Activated CD4-positive, alpha-beta T cell treated with anti-CD3 and anti-CD28 coated beads for 36 hours (primary cell): ENCODE measurements at regions of chr14 and their contacts with region 1.

Region 1: DNA sequence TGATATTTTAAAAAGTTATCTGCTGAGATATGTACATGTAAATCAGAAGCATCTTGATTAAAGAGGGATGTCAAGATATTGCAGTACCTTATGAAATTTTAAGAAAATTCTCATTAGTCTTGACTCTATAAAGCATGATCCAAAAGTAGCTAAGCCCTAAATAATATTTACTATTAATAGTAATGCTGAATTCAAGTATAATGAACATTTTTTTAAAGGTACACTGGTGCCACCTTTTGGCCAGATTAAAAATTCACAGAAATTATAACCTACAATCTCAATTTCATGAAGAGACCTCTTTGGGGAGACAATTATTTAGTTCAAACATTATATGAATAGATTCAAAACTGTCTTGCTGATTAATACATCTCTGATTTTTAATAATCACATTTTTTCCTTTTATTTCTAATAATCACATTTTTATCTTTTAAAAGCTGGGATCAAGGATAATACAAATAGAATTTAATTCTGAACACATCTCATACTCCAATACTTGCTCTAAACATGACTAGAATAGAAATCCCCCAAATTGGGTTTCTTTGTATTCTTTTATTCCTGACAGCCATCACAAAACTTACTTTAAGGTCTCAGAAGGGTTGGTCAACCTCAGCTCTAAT is 13.4 kb downstream of the AKAP5 start:
- DNase-seq: no peak
- ATAC-seq: no peak
- H3K4me3 Mint-ChIP-seq: no peak overlapping the region
- H3K27ac Mint-ChIP-seq: no peak overlapping the region
- H3K4me1 Mint-ChIP-seq: peaks cover 37% of the 10 kb centered on the region
- H3K27me3 Mint-ChIP-seq: no peaks in the 10 kb centered on the region

Region 2: GRCh38 chr14:62905566-62905965 is 1573.2 kb before region 1 on chr14:
- CTCF ChIA-PET with region 1: no interaction called
- POLR2A ChIA-PET with region 1: no interaction called
- intact Hi-C with region 1: no loop called
- DNase-seq: no peak
- ATAC-seq: no peak
- H3K4me3 Mint-ChIP-seq: no peak overlapping the region
- H3K27ac Mint-ChIP-seq: no peak overlapping the region
- H3K4me1 Mint-ChIP-seq: no peaks in the 10 kb centered on the region
- H3K27me3 Mint-ChIP-seq: peaks cover 2% of the 10 kb centered on the region

Region 3: DNA sequence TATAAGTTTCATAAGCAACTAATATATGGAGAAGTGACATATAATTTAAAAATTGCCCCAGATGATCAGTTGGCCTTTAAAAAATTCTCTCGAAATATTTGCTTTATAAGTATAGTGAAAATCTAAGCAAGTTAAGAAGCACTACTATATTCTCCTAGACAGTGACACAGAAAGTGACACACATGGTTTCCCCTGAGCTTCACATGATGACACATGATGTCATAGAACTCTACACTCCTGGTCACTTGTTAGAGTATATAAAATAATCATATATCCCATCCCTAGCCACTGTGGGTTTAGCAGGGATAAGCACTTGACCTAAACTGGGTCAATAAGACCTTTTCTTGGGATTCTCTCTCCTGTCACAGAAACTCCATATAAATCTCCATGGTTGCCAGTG is 133.2 kb before region 1 on chr14:
- CTCF ChIA-PET with region 1: interaction called, 33 read pairs
- POLR2A ChIA-PET with region 1: no interaction called
- intact Hi-C with region 1: loop called (anchors 1 to 2 kb)
- DNase-seq: no peak
- ATAC-seq: no peak
- H3K4me3 Mint-ChIP-seq: no peak overlapping the region
- H3K27ac Mint-ChIP-seq: no peak overlapping the region
- H3K4me1 Mint-ChIP-seq: no peaks in the 10 kb centered on the region
- H3K27me3 Mint-ChIP-seq: no peaks in the 10 kb centered on the region

Region 4: DNA sequence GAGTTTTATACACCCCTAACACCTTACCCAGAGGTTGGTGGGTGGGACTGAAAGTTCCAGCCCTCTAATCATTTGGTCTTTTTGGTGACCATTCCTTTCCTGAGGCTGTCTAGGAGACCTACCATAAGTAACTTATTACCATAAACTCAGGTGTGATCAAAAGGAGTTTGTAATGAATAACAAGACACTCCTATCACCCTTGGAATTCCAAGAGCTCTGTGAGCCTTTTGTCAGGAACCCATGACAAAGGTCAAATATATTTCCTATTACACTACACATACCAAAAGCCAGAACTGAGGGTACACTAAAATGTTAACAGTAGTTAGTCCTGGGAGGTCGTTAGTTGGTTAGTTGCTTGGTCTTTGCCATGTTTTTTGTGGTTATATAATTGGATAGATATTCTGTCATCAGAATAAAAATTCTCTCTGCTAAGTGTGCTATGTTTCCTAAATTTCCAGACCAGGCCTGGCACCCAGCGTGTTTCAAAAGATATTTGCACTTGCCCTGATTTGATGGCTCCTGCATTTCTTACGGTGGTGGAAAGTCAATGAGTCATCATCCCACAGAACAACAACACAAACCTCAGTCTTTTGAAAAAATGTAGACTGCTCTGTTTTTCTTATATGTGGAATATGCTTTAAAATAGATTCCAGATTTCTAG is 40.4 kb before region 1 on chr14:
- CTCF ChIA-PET with region 1: interaction called, 3 read pairs
- POLR2A ChIA-PET with region 1: no interaction called
- intact Hi-C with region 1: loop called in 1 of 2 experiments (anchors 5 kb)
- DNase-seq: no peak
- ATAC-seq: peak; percentile 30
- H3K4me3 Mint-ChIP-seq: no peak overlapping the region
- H3K27ac Mint-ChIP-seq: peak overlapping the region; percentile 68
- H3K4me1 Mint-ChIP-seq: peaks cover 10% of the 10 kb centered on the region
- H3K27me3 Mint-ChIP-seq: no peaks in the 10 kb centered on the region

Region 5: DNA sequence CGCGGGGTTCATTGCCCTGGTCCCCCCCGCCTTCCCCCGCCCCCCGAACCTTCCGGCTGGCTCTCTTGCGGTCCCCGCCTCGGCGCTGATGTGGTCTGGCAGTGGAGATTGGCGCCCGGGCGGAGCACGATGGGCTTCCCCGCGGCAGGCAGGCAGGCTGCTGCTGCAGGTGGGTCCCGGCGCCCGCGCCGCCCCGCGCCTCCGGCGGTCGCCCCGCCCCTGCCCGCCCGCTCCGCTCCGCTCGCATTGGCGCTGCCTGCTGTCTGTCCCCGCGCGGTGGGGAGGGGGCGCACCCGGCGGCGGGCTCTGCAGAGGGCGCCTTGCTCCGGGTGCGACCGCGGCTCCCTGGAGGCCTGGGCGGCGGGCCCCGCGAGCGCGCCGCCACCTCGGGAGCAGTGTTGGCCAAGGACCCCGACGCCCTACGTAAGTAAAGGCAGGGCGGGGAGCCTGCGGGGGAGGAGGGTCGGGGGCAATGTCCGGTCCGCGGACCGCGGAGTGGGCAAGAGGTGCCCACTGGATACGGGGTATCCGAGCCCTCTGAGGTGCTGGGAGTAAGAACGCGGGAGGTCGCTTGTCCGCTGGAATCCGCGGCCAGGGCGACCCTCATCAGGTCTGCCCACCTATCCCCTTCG is 13.4 kb before region 1 on chr14 and contains the start of gene AKAP5:
- CTCF ChIA-PET with region 1: interaction called, 18 read pairs
- POLR2A ChIA-PET with region 1: interaction called, 4 read pairs
- intact Hi-C with region 1: no loop called
- DNase-seq: peak; percentile 70
- ATAC-seq: peak; percentile 79
- H3K4me3 Mint-ChIP-seq: peak within 1 kb of the TSS; percentile 74
- H3K27ac Mint-ChIP-seq: peak within 1 kb of the TSS; percentile 67
- H3K4me1 Mint-ChIP-seq: peaks cover 42% of the 10 kb centered on the region
- H3K27me3 Mint-ChIP-seq: no peaks in the 10 kb centered on the region
- total RNA-seq, gene AKAP5: 0.39 to 0.43 TPM